K562 (cell line): ENCODE measurements at regions of chr15 and their contacts with region 1.

Region 1: DNA sequence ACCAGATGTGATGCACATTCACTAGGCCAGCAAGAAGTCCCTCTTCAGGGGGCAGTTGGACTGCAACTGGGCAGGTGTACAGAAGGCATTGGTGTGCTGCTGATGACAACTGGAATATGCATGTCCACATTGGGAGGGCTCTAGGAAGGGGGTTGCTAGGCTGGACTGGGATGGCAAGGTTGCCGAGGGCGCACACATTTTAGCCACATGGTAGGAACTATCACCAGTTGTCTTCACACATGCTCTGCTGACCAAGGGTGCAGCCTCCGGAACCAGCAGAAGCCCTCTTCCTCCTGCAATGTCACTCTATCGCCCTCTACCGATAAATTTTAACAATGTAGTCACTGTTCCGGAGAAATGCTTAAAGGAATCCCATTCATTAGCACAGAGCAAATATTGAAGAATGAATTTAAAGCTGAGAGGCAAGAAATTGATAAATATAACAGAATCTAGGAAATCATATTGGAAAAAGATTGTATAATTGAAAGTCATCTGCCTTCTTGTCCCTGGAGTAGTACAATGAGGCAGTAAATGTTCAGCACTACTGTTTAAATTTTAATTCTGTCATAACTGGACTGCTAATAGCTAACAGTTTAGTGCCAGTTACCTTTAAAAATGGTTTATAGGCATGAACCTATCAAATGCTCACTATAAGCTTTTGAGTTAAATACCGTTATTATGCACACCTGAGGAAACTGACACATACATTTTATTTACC is 22.6 kb upstream of the LYSMD4 start:
- DNase-seq: peak; percentile 49 to 70 (median 60)
- ATAC-seq: peak; percentile 94
- H3K4me3 ChIP-seq: no peak overlapping the region
- H3K27ac ChIP-seq: no peak overlapping the region
- H3K4me1 ChIP-seq: peaks cover 0 to 3% of the 10 kb centered on the region in 2 experiments; a peak in 3 of 5 replicates
- H3K27me3 ChIP-seq: peaks cover 4 to 12% of the 10 kb centered on the region in 2 experiments
- CTCF ChIP-seq: peak; percentile 63 to 82 (median 72)
- EP300 ChIP-seq: no peak
- POLR2A ChIP-seq: no peak
- RAD21 ChIP-seq: peak; percentile 63 to 85

Region 2: GRCh38 chr15:99275525-99276128 is 480.2 kb before region 1 on chr15:
- CTCF ChIA-PET with region 1: interaction called, 6 read pairs
- POLR2A ChIA-PET with region 1: interaction called, 3 read pairs
- in situ Hi-C with region 1: no loop called
- intact Hi-C with region 1: loop called (anchors 1 kb)
- DNase-seq: no peak
- ATAC-seq: no peak
- H3K4me3 ChIP-seq: no peak overlapping the region
- H3K27ac ChIP-seq: no peak overlapping the region
- H3K4me1 ChIP-seq: no peaks in the 10 kb centered on the region
- H3K27me3 ChIP-seq: no peaks in the 10 kb centered on the region
- CTCF ChIP-seq: no peak
- EP300 ChIP-seq: no peak
- POLR2A ChIP-seq: no peak
- RAD21 ChIP-seq: no peak

Region 3: DNA sequence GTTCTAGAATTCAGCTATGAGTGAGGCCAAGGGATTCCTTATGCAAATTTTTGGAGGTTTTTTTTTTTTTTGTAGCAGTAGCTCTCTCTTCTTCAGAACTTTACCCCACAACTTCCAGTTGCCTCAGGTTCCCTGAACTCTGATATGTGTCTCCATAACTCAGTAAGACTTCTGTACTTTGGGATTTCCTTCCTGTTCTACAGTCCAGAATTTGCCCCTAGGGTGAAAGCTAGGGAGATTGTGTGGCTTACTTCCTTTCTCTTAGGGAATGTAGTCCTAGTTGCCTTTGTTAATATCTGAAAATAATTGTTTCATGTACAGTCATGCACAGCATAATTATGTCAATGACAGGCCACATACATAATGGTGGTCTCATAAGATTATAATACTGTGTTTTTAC is 473.7 kb before region 1 on chr15:
- CTCF ChIA-PET with region 1: interaction called, 9 read pairs
- POLR2A ChIA-PET with region 1: no interaction called
- in situ Hi-C with region 1: no loop called
- intact Hi-C with region 1: loop called (anchors 2 kb)
- DNase-seq: no peak
- ATAC-seq: no peak
- H3K4me3 ChIP-seq: no peak overlapping the region
- H3K27ac ChIP-seq: no peak overlapping the region
- H3K4me1 ChIP-seq: no peaks in the 10 kb centered on the region
- H3K27me3 ChIP-seq: no peaks in the 10 kb centered on the region
- CTCF ChIP-seq: no peak
- EP300 ChIP-seq: no peak
- POLR2A ChIP-seq: no peak
- RAD21 ChIP-seq: no peak

Region 4: GRCh38 chr15:99635807-99636206 is 120.0 kb before region 1 on chr15:
- CTCF ChIA-PET with region 1: no interaction called
- POLR2A ChIA-PET with region 1: no interaction called
- in situ Hi-C with region 1: no loop called
- intact Hi-C with region 1: no loop called
- DNase-seq: no peak
- ATAC-seq: no peak
- H3K4me3 ChIP-seq: no peak overlapping the region
- H3K27ac ChIP-seq: no peak overlapping the region
- H3K4me1 ChIP-seq: no peaks in the 10 kb centered on the region
- H3K27me3 ChIP-seq: no peaks in the 10 kb centered on the region
- CTCF ChIP-seq: no peak
- EP300 ChIP-seq: no peak
- POLR2A ChIP-seq: no peak
- RAD21 ChIP-seq: no peak